ENCODE measurements at regions of chr15 and their contacts with region 1.

Region 1: GRCh38 chr15:80455668-80456442 is 51.7 kb downstream of the ARNT2 start:
- DNase-seq: no peak
- ATAC-seq: peak; percentile 86 to 89
- H3K4me3 ChIP-seq: no peak overlapping the region
- H3K27ac ChIP-seq: no peak overlapping the region
- H3K4me1 ChIP-seq: peaks cover 30% of the 10 kb centered on the region
- H3K27me3 ChIP-seq: peaks cover 3% of the 10 kb centered on the region
- CTCF ChIP-seq: peak; percentile 93

Region 2: GRCh38 chr15:80343554-80343992 is 112.3 kb before region 1 on chr15:
- intact Hi-C with region 1: no loop called
- DNase-seq: peak; percentile 55
- ATAC-seq: peak; percentile 80 to 88
- H3K4me3 ChIP-seq: no peak overlapping the region
- H3K27ac ChIP-seq: no peak overlapping the region
- H3K4me1 ChIP-seq: no peaks in the 10 kb centered on the region
- H3K27me3 ChIP-seq: peaks cover 4% of the 10 kb centered on the region
- CTCF ChIP-seq: no peak

Region 3: GRCh38 chr15:80384432-80384831 is 71.4 kb before region 1 on chr15:
- intact Hi-C with region 1: no loop called
- DNase-seq: no peak
- ATAC-seq: no peak
- H3K4me3 ChIP-seq: no peak overlapping the region
- H3K27ac ChIP-seq: no peak overlapping the region
- H3K4me1 ChIP-seq: no peaks in the 10 kb centered on the region
- H3K27me3 ChIP-seq: no peaks in the 10 kb centered on the region
- CTCF ChIP-seq: no peak

Region 4: DNA sequence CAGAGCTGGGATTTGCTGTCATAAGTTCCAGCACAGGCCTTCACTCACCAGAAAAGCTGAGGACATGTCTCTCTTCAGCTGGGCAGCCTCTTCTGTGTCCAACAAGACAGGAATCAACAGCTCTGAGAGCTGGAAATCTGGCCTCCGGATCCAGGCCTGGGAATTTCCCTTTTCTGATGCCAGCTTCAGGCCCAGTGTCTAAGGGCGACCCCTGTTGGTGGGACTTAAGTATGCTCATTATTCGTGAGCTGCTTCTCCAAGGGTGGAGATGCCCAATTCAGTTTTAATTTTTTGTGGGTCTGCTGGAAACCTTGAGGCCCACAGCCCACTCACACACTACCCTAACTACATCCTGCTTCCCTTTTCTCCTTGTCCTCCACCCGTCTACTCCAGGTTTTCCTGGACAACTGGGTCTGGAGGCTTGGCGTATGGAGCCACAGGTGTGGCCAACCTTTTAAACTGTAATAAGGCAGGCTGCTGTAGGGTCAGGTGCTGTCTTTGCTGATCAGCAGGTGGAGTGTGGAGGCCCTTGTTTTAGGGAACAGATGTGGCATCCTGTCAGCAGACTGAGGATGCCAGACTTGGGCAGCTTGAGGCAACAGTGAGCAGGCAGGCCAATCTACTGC is 320.7 kb after region 1 on chr15:
- intact Hi-C with region 1: loop called (anchors 10 kb)
- DNase-seq: peak; percentile 66
- ATAC-seq: peak; percentile 57 to 63
- H3K4me3 ChIP-seq: no peak overlapping the region
- H3K27ac ChIP-seq: peak overlapping the region; percentile 57
- H3K4me1 ChIP-seq: peaks cover 51% of the 10 kb centered on the region
- H3K27me3 ChIP-seq: peaks cover 24% of the 10 kb centered on the region
- CTCF ChIP-seq: peak; percentile 82

Region 5: GRCh38 chr15:80970018-80970658 is 514.3 kb after region 1 on chr15:
- intact Hi-C with region 1: loop called (anchors 10 kb)
- DNase-seq: no peak
- ATAC-seq: peak; percentile 71 to 72
- H3K4me3 ChIP-seq: no peak overlapping the region
- H3K27ac ChIP-seq: no peak overlapping the region
- H3K4me1 ChIP-seq: no peaks in the 10 kb centered on the region
- H3K27me3 ChIP-seq: no peaks in the 10 kb centered on the region
- CTCF ChIP-seq: peak; percentile 82

Measured in lower lobe of right lung (tissue), 2 donors.